Calu3 (cell line): ENCODE measurements at regions of chr5 and their contacts with region 1.

Region 1: DNA sequence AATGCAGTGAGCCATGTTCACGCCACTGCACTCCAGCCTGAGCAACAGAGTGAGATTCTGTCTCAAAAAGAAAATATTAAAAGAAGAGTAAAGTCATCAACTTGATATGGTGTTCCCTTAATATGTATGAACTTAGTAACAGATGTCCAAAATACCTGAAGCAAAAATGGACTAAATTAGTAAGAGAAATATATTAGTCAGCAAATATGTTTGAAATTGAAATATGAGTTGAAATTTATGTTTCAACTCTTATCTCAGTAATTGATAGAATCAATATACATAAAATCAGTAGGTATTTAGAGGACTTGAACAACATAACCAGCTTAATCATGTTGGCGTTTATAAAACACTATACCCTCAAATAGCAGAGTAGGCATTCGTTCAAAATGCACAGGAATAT is 668.5 kb downstream of the ISL1 start:
- DNase-seq: no peak
- H3K4me3 Mint-ChIP-seq: no peak overlapping the region
- H3K27ac Mint-ChIP-seq: no peak overlapping the region
- H3K4me1 Mint-ChIP-seq: no peaks in the 10 kb centered on the region
- H3K27me3 Mint-ChIP-seq: no peaks in the 10 kb centered on the region
- CTCF ChIP-seq: no peak

Region 2: GRCh38 chr5:52077941-52078815 is 26.4 kb after region 1 on chr5:
- CTCF ChIA-PET with region 1: no interaction called
- intact Hi-C with region 1: no loop called
- DNase-seq: no peak
- H3K4me3 Mint-ChIP-seq: no peak overlapping the region
- H3K27ac Mint-ChIP-seq: no peak overlapping the region
- H3K4me1 Mint-ChIP-seq: no peaks in the 10 kb centered on the region
- H3K27me3 Mint-ChIP-seq: no peaks in the 10 kb centered on the region
- CTCF ChIP-seq: no peak

Region 3: DNA sequence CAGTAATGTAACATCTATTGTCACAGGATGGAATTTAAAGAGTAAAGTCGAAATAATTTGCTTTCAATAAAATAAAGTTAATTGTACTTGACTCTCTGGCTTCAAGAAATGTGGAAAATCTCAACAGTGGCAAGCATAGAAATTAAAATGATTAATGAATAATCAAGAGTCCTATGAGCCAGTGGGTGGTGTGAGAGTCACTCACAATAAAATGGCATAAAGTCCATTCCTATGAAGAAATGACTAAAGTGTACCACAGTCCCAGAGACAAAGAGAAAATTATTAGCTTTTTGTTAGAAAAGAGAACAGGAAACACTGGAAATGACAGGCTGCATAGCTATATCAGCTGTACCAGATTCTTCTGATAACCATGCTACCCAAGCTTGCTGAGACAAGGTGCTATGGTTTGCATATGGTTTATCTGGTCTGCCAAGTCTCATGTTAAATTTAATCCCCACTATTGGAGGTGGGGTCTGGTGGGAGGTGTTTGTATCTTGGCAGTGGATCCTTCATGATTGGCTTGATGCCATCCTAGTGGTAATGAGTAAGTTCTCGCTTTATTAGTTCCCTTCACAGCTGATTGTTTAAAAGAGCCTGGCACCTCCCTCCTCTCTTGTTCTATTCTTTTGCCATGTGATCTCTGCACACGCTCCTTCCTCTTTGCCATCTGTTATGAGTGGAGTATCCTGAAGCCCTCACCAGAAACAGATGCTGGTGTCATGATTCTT is 88.3 kb after region 1 on chr5:
- CTCF ChIA-PET with region 1: no interaction called
- intact Hi-C with region 1: loop called (anchors 10 kb)
- DNase-seq: no peak
- H3K4me3 Mint-ChIP-seq: no peak overlapping the region
- H3K27ac Mint-ChIP-seq: no peak overlapping the region
- H3K4me1 Mint-ChIP-seq: no peaks in the 10 kb centered on the region
- H3K27me3 Mint-ChIP-seq: no peaks in the 10 kb centered on the region
- CTCF ChIP-seq: no peak